Activated T-helper 2 cell treated with anti-CD3 and anti-CD28 coated beads, Interferon-gamma antibody, Interleukin-2, Interleukin-4, amounts not matched to agents 10 μg/mL and 5 μg/mL and 100 μg/mL, durations not matched to agents 14 hours and 24 hours and 36 hours (primary cell): ENCODE measurements at regions of chr9 and their contacts with region 1.

Region 1: GRCh38 chr9:129610473-129611301 is 10.2 kb downstream of the C9orf50 start:
- DNase-seq: peak; percentile 65
- H3K4me3 Mint-ChIP-seq: peak overlapping the region; percentile 80
- H3K27ac Mint-ChIP-seq: peak overlapping the region; percentile 70
- H3K4me1 Mint-ChIP-seq: peaks cover 25% of the 10 kb centered on the region
- H3K27me3 Mint-ChIP-seq: no peaks in the 10 kb centered on the region

Region 2: GRCh38 chr9:129182625-129183495 is 427.8 kb before region 1 on chr9:
- intact Hi-C with region 1: no loop called
- DNase-seq: no peak
- H3K4me3 Mint-ChIP-seq: no peak overlapping the region
- H3K27ac Mint-ChIP-seq: no peak overlapping the region
- H3K4me1 Mint-ChIP-seq: peaks cover 12% of the 10 kb centered on the region
- H3K27me3 Mint-ChIP-seq: no peaks in the 10 kb centered on the region

Region 3: DNA sequence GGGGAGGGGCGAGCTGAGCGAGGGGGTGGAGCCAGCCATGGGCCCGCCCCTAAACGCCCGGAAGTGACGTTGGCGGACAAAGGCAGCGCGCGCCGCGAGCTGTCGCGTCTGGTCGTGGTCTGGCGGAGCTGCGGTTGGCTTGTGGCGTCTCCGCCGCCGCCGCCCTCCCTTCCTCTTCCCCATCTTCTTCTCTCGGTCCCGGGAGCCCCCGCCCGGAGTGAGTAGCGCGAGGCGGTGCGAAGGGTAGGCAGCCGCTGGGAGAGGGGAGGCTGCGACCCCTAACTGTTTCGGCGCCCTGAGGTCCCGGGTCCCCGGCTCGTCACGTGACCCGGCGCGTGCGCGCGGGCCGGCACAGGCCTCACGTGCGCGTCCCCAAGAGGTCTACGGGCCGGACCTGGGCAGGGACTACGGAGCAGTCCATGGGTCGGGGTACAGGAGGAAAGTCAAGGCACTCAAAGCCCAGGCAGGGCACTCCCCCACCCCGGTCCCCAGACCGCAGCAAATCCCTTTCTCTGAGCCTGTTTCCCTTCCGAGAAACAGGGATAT is 15.5 kb after region 1 on chr9 and contains the start of gene NTMT1:
- intact Hi-C with region 1: loop called (anchors 1 kb)
- DNase-seq: peak; percentile 88
- H3K4me3 Mint-ChIP-seq: peak within 1 kb of the TSS; percentile 85
- H3K27ac Mint-ChIP-seq: peak within 1 kb of the TSS; percentile 96
- H3K4me1 Mint-ChIP-seq: peaks cover 45% of the 10 kb centered on the region
- H3K27me3 Mint-ChIP-seq: peaks cover 5% of the 10 kb centered on the region
- total RNA-seq, gene NTMT1: 58.4 and 61.5 TPM in 2 replicates

Region 4: GRCh38 chr9:129720181-129720864 is 109.6 kb after region 1 on chr9:
- intact Hi-C with region 1: no loop called
- DNase-seq: no peak
- H3K4me3 Mint-ChIP-seq: no peak overlapping the region
- H3K27ac Mint-ChIP-seq: no peak overlapping the region
- H3K4me1 Mint-ChIP-seq: no peaks in the 10 kb centered on the region
- H3K27me3 Mint-ChIP-seq: no peaks in the 10 kb centered on the region